AG04449 (cell line): ENCODE measurements at regions of chr3 and their contacts with region 1.

Region 1: GRCh38 chr3:182683453-182683852 is 109.9 kb upstream of the ATP11B start:
- DNase-seq: peak; percentile 17
- H3K4me3 ChIP-seq: no peak overlapping the region
- CTCF ChIP-seq: peak; percentile 80

Region 2: DNA sequence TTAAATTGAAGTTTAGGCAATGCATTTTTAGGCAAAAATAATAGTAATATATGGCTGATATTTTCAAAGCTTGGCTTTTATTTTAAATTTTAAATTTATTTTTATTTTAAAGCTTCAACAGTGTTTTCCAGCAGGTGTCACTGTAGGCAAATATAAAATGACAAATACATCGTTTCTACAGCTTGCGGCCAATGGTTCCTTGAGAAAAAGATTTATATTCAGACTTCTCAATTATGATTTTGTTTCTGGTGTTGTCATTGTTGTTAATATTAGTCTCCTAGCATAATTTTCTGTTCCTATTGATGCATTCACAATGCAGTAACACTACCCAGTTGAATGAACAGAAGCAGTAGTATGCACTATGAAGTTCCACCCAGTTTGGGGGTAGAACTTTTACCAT is 1473.2 kb before region 1 on chr3:
- CTCF ChIA-PET with region 1: interaction called, 19 read pairs
- POLR2A ChIA-PET with region 1: no interaction called
- DNase-seq: no peak
- H3K4me3 ChIP-seq: no peak overlapping the region
- CTCF ChIP-seq: no peak

Region 3: DNA sequence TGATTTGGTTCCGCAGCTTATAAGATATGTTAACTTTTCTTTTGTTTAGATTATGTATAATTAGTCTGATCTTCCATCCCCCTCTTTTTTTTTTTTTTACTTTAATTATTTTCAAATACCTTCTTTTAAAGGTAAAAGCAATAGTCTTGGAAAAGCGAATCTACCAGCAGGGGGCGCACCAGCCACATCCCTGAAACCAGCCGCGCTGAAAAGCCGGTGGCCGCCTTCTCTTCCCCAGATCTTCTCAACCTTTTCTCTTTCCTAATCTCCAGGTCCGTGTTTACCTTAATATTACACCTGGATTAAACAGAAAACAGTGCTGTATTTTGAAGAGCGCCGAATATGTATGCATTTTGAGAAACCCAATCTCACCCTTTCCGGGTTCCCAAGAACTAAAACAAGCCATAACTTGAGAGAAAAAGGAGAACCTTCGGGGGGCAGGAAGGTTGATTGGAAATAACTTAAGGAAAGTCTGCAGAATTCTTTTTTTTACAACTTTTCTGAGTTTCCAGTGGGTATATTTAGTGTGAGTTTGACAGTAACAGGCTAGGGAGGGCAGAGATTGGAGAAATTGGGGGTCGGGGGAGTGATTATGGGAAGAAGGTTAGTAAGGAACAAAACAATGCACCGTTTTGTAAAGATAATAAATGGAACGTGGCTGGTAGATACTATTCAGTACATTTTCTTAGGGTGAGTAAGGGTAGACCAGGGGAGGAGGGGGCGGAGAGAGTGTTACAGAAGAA is 973.7 kb before region 1 on chr3:
- CTCF ChIA-PET with region 1: interaction called, 117 read pairs
- POLR2A ChIA-PET with region 1: no interaction called
- DNase-seq: no peak
- H3K4me3 ChIP-seq: no peak overlapping the region
- CTCF ChIP-seq: peak; percentile 61

Region 4: GRCh38 chr3:182412065-182412464 is 271.4 kb before region 1 on chr3:
- CTCF ChIA-PET with region 1: no interaction called
- POLR2A ChIA-PET with region 1: no interaction called
- DNase-seq: no peak
- H3K4me3 ChIP-seq: no peak overlapping the region
- CTCF ChIP-seq: no peak

Region 5: GRCh38 chr3:182697345-182697919 is 14.0 kb after region 1 on chr3:
- CTCF ChIA-PET with region 1: interaction called, 20 read pairs
- POLR2A ChIA-PET with region 1: no interaction called
- DNase-seq: no peak
- H3K4me3 ChIP-seq: no peak overlapping the region
- CTCF ChIP-seq: no peak